ENCODE measurements at regions of chr3 and their contacts with region 1.

Region 1: GRCh38 chr3:62521464-62522400 is 148.4 kb upstream of the FEZF2 start:
- DNase-seq: no peak
- ATAC-seq: no peak
- H3K4me3 ChIP-seq: no peak overlapping the region
- H3K27ac ChIP-seq: no peak overlapping the region
- H3K4me1 ChIP-seq: no peaks in the 10 kb centered on the region
- H3K27me3 ChIP-seq: peaks cover 26% of the 10 kb centered on the region; the same call in 1 of the 2 replicates
- CTCF ChIP-seq: no peak

Region 2: DNA sequence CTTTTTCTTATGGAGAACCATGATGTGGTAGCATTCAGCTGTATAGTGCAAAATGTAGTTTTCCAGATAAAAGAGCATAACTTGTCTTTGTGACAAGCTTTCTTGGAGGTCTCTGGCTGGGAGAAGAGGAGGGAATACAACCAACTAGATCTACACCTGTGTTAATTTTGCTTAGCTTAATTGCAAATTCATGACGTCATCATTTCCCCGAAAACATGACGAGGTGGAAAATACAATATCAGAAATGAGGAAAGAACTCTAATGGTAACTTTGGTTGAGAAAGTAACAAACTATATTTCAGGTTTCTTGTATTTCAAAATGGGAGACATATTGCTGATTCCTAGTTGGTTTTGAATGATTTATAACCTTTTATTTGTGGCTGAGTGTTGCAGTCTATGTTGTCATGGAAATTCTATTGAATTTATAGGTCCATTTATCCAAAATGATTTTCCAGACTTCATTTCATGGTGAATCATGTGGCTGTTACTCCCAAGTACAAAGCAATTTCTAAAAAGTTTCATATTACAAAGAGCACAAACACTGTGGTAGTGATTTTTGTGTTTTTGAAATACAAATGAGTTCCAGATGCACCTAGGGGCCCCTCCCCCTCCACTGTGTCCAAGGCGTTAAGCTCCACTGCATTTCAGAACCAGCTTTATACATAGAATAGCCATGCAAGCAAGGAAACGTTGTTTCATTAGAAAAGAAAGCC is 455.6 kb before region 1 on chr3:
- CTCF ChIA-PET with region 1: no interaction called
- POLR2A ChIA-PET with region 1: interaction called, 23 read pairs
- intact Hi-C with region 1: no loop called
- DNase-seq: no peak
- ATAC-seq: no peak
- H3K4me3 ChIP-seq: no peak overlapping the region
- H3K27ac ChIP-seq: no peak overlapping the region
- H3K4me1 ChIP-seq: no peaks in the 10 kb centered on the region
- H3K27me3 ChIP-seq: no peaks in the 10 kb centered on the region
- CTCF ChIP-seq: no peak

Region 3: GRCh38 chr3:62261121-62261520 is 260.6 kb before region 1 on chr3:
- CTCF ChIA-PET with region 1: no interaction called
- POLR2A ChIA-PET with region 1: no interaction called
- intact Hi-C with region 1: no loop called
- DNase-seq: no peak
- ATAC-seq: no peak
- H3K4me3 ChIP-seq: no peak overlapping the region
- H3K27ac ChIP-seq: no peak overlapping the region
- H3K4me1 ChIP-seq: no peaks in the 10 kb centered on the region
- H3K27me3 ChIP-seq: no peaks in the 10 kb centered on the region
- CTCF ChIP-seq: no peak

Measured in PC-3 (cell line).